ENCODE measurements at regions of chr1 and their contacts with region 1.

Region 1: GRCh38 chr1:175033953-175034352 is 10.7 kb upstream of the MRPS14 start:
- DNase-seq: peak; percentile 42
- H3K4me3 Mint-ChIP-seq: no peak overlapping the region
- H3K27ac Mint-ChIP-seq: no peak overlapping the region
- H3K4me1 Mint-ChIP-seq: peaks cover 10% of the 10 kb centered on the region
- H3K27me3 Mint-ChIP-seq: peaks cover 18% of the 10 kb centered on the region

Region 2: GRCh38 chr1:174480324-174480723 is 553.6 kb before region 1 on chr1:
- intact Hi-C with region 1: no loop called
- DNase-seq: no peak
- H3K4me3 Mint-ChIP-seq: no peak overlapping the region
- H3K27ac Mint-ChIP-seq: no peak overlapping the region
- H3K4me1 Mint-ChIP-seq: no peaks in the 10 kb centered on the region
- H3K27me3 Mint-ChIP-seq: no peaks in the 10 kb centered on the region

Region 3: DNA sequence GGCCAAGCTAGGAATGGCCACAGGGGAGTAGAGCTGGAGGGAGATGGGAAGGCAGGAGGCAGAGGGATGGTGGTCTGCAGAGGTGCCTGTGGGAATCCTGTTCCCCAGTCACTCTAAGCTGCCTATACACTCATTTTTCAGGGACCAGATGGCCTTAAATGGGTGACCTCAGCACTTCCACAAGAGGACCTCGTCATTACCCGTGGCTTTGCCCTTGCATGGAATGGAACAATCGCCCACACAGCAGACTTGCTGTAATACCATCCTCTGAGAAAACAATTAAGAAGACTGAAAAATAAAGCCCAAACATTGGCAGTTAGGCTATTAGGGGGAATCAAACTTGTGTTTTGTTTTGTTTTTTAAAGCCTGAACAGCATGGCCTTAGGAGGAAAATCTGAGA is 20.8 kb after region 1 on chr1:
- intact Hi-C with region 1: no loop called
- DNase-seq: no peak
- H3K4me3 Mint-ChIP-seq: no peak overlapping the region
- H3K27ac Mint-ChIP-seq: no peak overlapping the region
- H3K4me1 Mint-ChIP-seq: no peaks in the 10 kb centered on the region
- H3K27me3 Mint-ChIP-seq: peaks cover 29% of the 10 kb centered on the region

Region 4: DNA sequence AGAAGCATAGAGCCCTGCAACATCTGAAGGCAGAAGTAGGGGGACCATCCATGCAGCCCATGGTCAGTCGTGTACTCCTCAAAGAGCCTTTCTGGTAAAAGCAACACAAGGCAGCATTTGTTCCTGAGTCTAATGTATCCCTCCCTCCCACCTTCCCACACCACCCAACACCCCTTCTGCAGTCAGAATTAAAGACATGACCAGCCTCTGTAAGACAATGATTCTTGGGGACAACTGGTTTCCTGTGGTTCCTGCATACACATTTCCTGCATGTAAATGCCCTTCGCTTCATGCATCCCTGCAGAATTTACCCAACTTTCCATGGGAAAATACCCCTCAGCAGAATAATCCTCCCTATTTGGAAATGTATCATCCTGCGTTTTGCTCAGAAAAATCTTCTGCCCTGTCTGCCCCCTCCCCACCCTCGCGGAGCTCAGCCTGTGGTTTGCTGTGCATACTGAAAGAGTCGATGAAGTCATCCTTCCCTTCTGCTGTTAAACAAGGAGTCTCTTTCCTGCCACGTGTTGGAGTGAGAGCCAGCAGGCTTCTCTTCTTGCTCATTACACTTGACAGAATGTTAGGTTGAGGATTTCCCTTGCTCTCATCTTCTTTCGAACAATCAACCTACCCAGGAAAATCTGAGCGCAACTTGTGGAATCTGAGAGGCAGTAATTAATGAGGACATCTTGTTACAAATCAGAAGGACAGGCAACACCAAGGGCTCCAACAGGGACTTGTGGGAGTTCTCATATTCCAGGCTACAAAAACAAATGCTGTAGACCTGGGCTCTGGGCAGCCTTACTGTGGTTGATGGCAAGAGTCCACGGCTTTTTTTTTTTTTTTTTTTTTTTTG is 38.4 kb after region 1 on chr1:
- intact Hi-C with region 1: loop called (anchors 5 kb)
- DNase-seq: peak; percentile 78
- H3K4me3 Mint-ChIP-seq: peak overlapping the region; percentile 73
- H3K27ac Mint-ChIP-seq: peak overlapping the region; percentile 13
- H3K4me1 Mint-ChIP-seq: peaks cover 14% of the 10 kb centered on the region
- H3K27me3 Mint-ChIP-seq: peaks cover 12% of the 10 kb centered on the region

Region 5: GRCh38 chr1:175124861-175125260 is 90.9 kb after region 1 on chr1:
- intact Hi-C with region 1: loop called (anchors 1 kb)
- DNase-seq: no peak
- H3K4me3 Mint-ChIP-seq: no peak overlapping the region
- H3K27ac Mint-ChIP-seq: no peak overlapping the region
- H3K4me1 Mint-ChIP-seq: no peaks in the 10 kb centered on the region
- H3K27me3 Mint-ChIP-seq: peaks cover 6% of the 10 kb centered on the region

Region 6: GRCh38 chr1:175188936-175189335 is 155.0 kb after region 1 on chr1:
- intact Hi-C with region 1: no loop called
- DNase-seq: peak; percentile 89
- H3K4me3 Mint-ChIP-seq: peak overlapping the region; percentile 99
- H3K27ac Mint-ChIP-seq: peak overlapping the region; percentile 81
- H3K4me1 Mint-ChIP-seq: peaks cover 70% of the 10 kb centered on the region
- H3K27me3 Mint-ChIP-seq: no peaks in the 10 kb centered on the region

Region 7: DNA sequence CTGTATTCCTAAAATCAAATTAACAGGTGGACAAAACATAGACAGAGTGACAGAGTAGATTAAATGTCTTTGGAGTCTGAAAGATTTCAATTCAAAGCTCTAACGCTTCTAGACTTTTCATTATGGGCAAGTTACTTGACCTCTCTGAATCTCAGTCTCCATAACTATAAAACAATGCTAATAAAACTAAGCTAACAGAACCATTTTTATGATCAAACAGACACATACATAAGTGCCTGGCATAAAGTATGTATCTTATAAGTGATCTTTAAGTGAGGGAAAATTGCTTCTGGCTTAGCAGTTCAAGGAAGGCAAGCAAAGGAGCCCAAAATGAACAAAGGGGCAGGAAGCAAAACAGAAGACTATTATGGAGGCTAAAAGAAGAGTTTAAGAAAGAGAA is 926.2 kb after region 1 on chr1:
- intact Hi-C with region 1: no loop called
- DNase-seq: no peak
- H3K4me3 Mint-ChIP-seq: no peak overlapping the region
- H3K27ac Mint-ChIP-seq: no peak overlapping the region
- H3K4me1 Mint-ChIP-seq: no peaks in the 10 kb centered on the region
- H3K27me3 Mint-ChIP-seq: no peaks in the 10 kb centered on the region